Panc1 (cell line): ENCODE measurements at regions of chr5 and their contacts with region 1.

Region 1: GRCh38 chr5:14292766-14293658 is 149.9 kb downstream of the TRIO start:
- DNase-seq: no peak
- ATAC-seq: 0 out of 2 replicates have a peak, but pooled peaks have one; percentile 44
- H3K4me3 ChIP-seq: no peak overlapping the region
- H3K27ac ChIP-seq: peak overlapping the region; percentile 5; the same call in 1 of the 2 replicates
- H3K4me1 ChIP-seq: no peaks in the 10 kb centered on the region; the same call in 1 of the 2 replicates
- H3K27me3 ChIP-seq: no peaks in the 10 kb centered on the region
- CTCF ChIP-seq: no peak

Region 2: DNA sequence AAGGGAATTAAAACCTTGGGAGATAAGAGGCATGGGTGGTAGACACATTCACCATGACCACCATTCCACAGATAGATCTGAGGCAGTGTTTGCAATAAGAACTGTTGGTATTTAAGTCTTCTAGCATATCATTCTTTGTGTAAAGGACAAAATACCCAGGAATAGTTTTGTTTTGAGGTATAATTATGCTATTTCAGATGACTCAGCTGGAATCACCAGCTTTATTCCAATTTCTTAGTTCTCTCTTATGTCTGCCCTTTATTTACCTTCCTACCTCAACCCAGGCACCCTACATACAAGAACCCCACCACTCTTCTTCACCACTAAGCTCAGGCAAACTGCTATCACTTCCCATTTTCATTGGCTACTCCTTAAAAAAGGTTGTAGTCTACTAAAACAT is 244.6 kb before region 1 on chr5:
- CTCF ChIA-PET with region 1: no interaction called
- POLR2A ChIA-PET with region 1: no interaction called
- in situ Hi-C with region 1: no loop called
- intact Hi-C with region 1: no loop called
- DNase-seq: no peak
- ATAC-seq: no peak
- H3K4me3 ChIP-seq: no peak overlapping the region
- H3K27ac ChIP-seq: peak overlapping the region; percentile 77
- H3K4me1 ChIP-seq: peaks cover 6% of the 10 kb centered on the region; the same call in 1 of the 2 replicates
- H3K27me3 ChIP-seq: no peaks in the 10 kb centered on the region
- CTCF ChIP-seq: no peak

Region 3: GRCh38 chr5:14258840-14259239 is 34.2 kb before region 1 on chr5:
- CTCF ChIA-PET with region 1: no interaction called
- POLR2A ChIA-PET with region 1: interaction called, 3 read pairs
- in situ Hi-C with region 1: loop called (anchors 5 kb)
- intact Hi-C with region 1: no loop called
- DNase-seq: no peak
- ATAC-seq: peak; percentile 20
- H3K4me3 ChIP-seq: peak overlapping the region; percentile 0 to 21; a peak in 3 of 4 replicates
- H3K27ac ChIP-seq: peak overlapping the region; percentile 96
- H3K4me1 ChIP-seq: peaks cover 99% of the 10 kb centered on the region
- H3K27me3 ChIP-seq: no peaks in the 10 kb centered on the region
- CTCF ChIP-seq: 0 out of 2 replicates have a peak, but pooled peaks have one; percentile 15

Region 4: DNA sequence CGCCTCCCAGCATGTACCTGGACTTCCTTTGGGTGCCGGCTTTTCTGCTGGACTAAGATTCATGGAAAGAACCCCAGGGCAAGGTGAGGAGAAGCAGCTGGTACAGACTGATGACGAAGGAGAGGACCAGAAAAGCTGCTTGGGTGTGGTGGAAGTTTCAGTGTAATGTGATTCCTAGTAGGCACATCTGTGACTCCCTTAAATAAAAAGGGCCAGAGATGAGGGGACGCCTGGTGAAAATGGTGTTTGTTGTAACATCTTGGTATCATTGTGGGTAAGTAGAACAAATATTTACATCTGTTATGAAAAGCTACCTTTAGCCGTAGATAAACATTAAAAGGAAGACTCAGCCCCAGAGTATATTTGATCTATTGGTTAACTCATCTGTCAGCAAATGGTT is 322.3 kb after region 1 on chr5:
- CTCF ChIA-PET with region 1: no interaction called
- POLR2A ChIA-PET with region 1: no interaction called
- in situ Hi-C with region 1: no loop called
- intact Hi-C with region 1: no loop called
- DNase-seq: no peak
- ATAC-seq: no peak
- H3K4me3 ChIP-seq: no peak overlapping the region
- H3K27ac ChIP-seq: no peak overlapping the region
- H3K4me1 ChIP-seq: no peaks in the 10 kb centered on the region
- H3K27me3 ChIP-seq: peaks cover 7% of the 10 kb centered on the region; the same call in 1 of the 2 replicates
- CTCF ChIP-seq: no peak